Activated T-helper 1 cell treated with anti-CD3 and anti-CD28 coated beads, Interleukin-12 subunit alpha, Interleukin-12 subunit beta, Interleukin-2, Interleukin-4 antibody, amounts not matched to agents 30 ng/mL and 10 ng/mL and 1 ng/mL, durations not matched to agents 14 hours and 24 hours and 36 hours (primary cell): ENCODE measurements at regions of chr6 and their contacts with region 1.

Region 1: GRCh38 chr6:14046476-14047068 is 71.0 kb upstream of the CD83 start:
- DNase-seq: peak; percentile 27
- H3K4me3 Mint-ChIP-seq: no peak overlapping the region
- H3K27ac Mint-ChIP-seq: no peak overlapping the region
- H3K4me1 Mint-ChIP-seq: no peaks in the 10 kb centered on the region
- H3K27me3 Mint-ChIP-seq: peaks cover 29% of the 10 kb centered on the region

Region 2: GRCh38 chr6:13908955-13909381 is 137.6 kb before region 1 on chr6:
- intact Hi-C with region 1: loop called (anchors 1 kb)
- DNase-seq: peak; percentile 10
- H3K4me3 Mint-ChIP-seq: no peak overlapping the region
- H3K27ac Mint-ChIP-seq: no peak overlapping the region
- H3K4me1 Mint-ChIP-seq: no peaks in the 10 kb centered on the region
- H3K27me3 Mint-ChIP-seq: peaks cover 35% of the 10 kb centered on the region

Region 3: DNA sequence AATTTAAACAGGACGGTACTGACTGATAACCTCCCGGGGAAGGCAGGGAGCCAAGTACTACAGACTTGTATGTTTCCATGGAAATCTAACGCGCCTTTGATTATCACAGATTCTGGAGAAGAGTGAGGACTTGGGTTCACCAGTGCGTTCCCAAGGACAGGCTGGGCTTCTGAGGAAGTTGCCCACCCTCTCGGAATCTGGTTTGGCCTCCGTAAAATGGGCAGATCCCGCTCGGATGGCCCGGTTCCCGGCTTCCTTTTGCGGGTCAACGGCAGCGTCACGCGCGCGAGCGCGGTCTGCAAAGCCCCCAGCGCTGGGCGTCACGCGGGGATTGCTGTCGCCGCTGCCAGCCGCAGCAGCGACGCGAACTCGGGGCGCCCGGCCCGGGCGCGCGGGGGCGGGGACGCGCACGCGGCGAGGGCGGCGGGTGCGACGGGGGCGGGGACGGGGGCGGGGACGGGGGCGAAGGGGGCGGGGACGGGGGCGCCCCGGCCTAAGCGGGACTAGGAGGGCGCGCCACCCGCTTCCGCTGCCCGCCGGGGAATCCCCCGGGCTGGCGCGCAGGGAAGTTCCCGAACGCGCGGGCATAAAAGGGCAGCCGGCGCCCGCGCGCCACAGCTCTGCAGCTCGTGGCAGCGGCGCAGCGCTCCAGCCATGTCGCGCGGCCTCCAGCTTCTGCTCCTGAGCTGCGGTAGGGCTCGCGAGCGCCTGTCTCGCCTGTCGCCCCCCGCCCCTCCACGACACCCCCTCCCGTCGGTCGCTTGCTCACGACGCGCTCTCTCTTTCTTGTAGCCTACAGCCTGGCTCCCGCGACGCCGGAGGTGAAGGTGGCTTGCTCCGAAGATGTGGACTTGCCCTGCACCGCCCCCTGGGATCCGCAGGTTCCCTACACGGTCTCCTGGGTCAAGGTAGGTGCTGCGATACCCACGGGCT is 70.9 kb after region 1 on chr6 and contains the start of gene CD83:
- intact Hi-C with region 1: loop called (anchors 2 kb)
- DNase-seq: peak; percentile 82
- H3K4me3 Mint-ChIP-seq: peak within 1 kb of the TSS; percentile 96
- H3K27ac Mint-ChIP-seq: peak within 1 kb of the TSS; percentile 83
- H3K4me1 Mint-ChIP-seq: peaks cover 46% of the 10 kb centered on the region
- H3K27me3 Mint-ChIP-seq: peaks cover 36% of the 10 kb centered on the region
- total RNA-seq, gene CD83: 101 and 107 TPM in 2 replicates